B cell (primary cell): ENCODE measurements at regions of chr2 and their contacts with region 1.

Region 1: GRCh38 chr2:13006829-13007717 is 290.3 kb downstream of the TRIB2 start:
- DNase-seq: peak; percentile 77
- ATAC-seq: peak; percentile 49
- H3K4me3 ChIP-seq: no peak overlapping the region
- H3K4me3 Mint-ChIP-seq: no peak overlapping the region
- H3K27ac ChIP-seq: no peak overlapping the region
- H3K27ac Mint-ChIP-seq: no peak overlapping the region
- H3K4me1 ChIP-seq: peaks cover 0 to 3% of the 10 kb centered on the region in 2 donors
- H3K4me1 Mint-ChIP-seq: peaks cover 2% of the 10 kb centered on the region
- H3K27me3 ChIP-seq: no peaks in the 10 kb centered on the region
- H3K27me3 Mint-ChIP-seq: peaks cover 21% of the 10 kb centered on the region
- CTCF ChIP-seq: peak; percentile 96

Region 2: GRCh38 chr2:11688222-11689069 is 1318.6 kb before region 1 on chr2:
- CTCF ChIA-PET with region 1: interaction called, 11 read pairs
- POLR2A ChIA-PET with region 1: no interaction called
- intact Hi-C with region 1: loop called (anchors 10 kb)
- DNase-seq: peak; percentile 89
- ATAC-seq: peak; percentile 83
- H3K4me3 ChIP-seq: peak overlapping the region in 1 of 5 experiments; percentile 17
- H3K4me3 Mint-ChIP-seq: peak overlapping the region; percentile 67
- H3K27ac ChIP-seq: no peak overlapping the region
- H3K27ac Mint-ChIP-seq: no peak overlapping the region
- H3K4me1 ChIP-seq: peaks cover 11 to 16% of the 10 kb centered on the region in 2 donors
- H3K4me1 Mint-ChIP-seq: peaks cover 8% of the 10 kb centered on the region
- H3K27me3 ChIP-seq: peaks cover 0 to 4% (median 0%) of the 10 kb centered on the region in 4 experiments
- H3K27me3 Mint-ChIP-seq: peaks cover 25% of the 10 kb centered on the region
- CTCF ChIP-seq: peak; percentile 85

Region 3: GRCh38 chr2:11863513-11864328 is 1143.4 kb before region 1 on chr2:
- CTCF ChIA-PET with region 1: interaction called, 21 read pairs
- POLR2A ChIA-PET with region 1: no interaction called
- intact Hi-C with region 1: loop called (anchors 1 kb)
- DNase-seq: peak; percentile 80
- ATAC-seq: peak; percentile 73
- H3K4me3 ChIP-seq: peak overlapping the region in 3 of 5 experiments; percentile 5 to 29 (median 26)
- H3K4me3 Mint-ChIP-seq: peak overlapping the region; percentile 73
- H3K27ac ChIP-seq: no peak overlapping the region
- H3K27ac Mint-ChIP-seq: peak overlapping the region; percentile 59
- H3K4me1 ChIP-seq: peaks cover 70 to 81% of the 10 kb centered on the region in 2 donors
- H3K4me1 Mint-ChIP-seq: peaks cover 87% of the 10 kb centered on the region
- H3K27me3 ChIP-seq: no peaks in the 10 kb centered on the region
- H3K27me3 Mint-ChIP-seq: no peaks in the 10 kb centered on the region
- CTCF ChIP-seq: peak; percentile 96

Region 4: DNA sequence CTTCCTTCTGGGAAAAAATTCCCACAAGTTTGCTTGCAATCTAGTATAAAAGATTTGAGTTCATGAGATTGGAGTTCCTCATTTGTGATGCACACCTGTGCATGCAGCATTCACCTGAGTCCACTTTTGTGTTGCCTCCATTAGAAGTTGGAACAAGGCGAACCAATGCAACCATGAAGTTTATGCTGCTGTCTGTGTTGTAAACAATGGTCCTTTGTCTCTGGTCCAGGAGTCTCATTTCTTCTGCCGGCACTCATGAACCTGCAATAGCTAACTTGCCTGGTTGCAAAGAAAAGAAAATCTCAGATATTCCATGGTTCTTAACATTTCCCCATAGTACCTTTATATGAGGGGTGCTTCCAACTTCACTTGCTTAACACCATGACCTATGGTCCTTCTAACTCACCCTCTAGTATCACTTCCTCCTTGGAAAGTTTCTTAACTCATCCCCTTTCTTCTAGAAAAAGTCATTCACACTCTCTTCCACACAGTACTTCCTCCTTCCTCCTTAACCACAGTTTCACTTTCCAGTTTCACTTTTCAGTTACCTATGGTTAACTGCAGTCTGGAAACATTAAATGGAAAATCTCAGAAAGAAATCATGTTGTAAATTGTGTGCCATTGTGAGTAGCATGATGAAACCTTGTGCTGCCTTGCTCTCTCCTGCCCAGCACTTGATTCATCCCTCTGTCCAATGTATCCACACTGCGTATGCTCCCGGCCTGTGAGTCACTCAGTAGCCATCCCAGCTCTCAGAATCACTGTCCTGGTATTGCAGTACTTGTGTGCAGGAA is 419.1 kb before region 1 on chr2:
- CTCF ChIA-PET with region 1: no interaction called
- POLR2A ChIA-PET with region 1: no interaction called
- intact Hi-C with region 1: no loop called
- DNase-seq: peak; percentile 86
- ATAC-seq: peak; percentile 94
- H3K4me3 ChIP-seq: peak overlapping the region in 1 of 5 experiments; percentile 34
- H3K4me3 Mint-ChIP-seq: peak overlapping the region; percentile 46
- H3K27ac ChIP-seq: no peak overlapping the region
- H3K27ac Mint-ChIP-seq: peak overlapping the region; percentile 75
- H3K4me1 ChIP-seq: peaks cover 39 to 41% of the 10 kb centered on the region in 2 donors
- H3K4me1 Mint-ChIP-seq: peaks cover 46% of the 10 kb centered on the region
- H3K27me3 ChIP-seq: no peaks in the 10 kb centered on the region
- H3K27me3 Mint-ChIP-seq: no peaks in the 10 kb centered on the region
- CTCF ChIP-seq: no peak

Region 5: DNA sequence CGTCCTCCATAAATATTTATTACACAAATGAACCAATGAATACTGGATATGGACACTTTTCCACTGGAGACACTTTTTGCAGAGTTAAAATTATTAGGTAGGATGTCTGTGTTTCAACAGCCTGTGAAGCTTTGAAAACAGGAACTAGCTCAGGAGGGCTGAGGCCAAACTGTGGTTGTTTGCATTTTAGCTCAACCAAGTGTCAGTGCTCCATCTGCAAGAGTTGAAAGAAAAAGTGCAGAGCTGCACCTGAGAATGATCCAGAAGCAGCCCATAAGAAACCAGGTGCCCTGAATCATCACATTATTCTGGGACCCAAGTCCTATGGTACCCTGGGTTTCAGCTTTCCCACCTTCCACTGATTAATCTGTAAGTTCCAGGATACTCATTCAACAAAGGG is 109.9 kb before region 1 on chr2:
- CTCF ChIA-PET with region 1: no interaction called
- POLR2A ChIA-PET with region 1: no interaction called
- intact Hi-C with region 1: no loop called
- DNase-seq: peak; percentile 8
- ATAC-seq: no peak
- H3K4me3 ChIP-seq: no peak overlapping the region
- H3K4me3 Mint-ChIP-seq: no peak overlapping the region
- H3K27ac ChIP-seq: no peak overlapping the region
- H3K27ac Mint-ChIP-seq: no peak overlapping the region
- H3K4me1 ChIP-seq: peaks cover 0 to 4% of the 10 kb centered on the region in 2 donors
- H3K4me1 Mint-ChIP-seq: peaks cover 7% of the 10 kb centered on the region
- H3K27me3 ChIP-seq: peaks cover 0 to 2% (median 0%) of the 10 kb centered on the region in 4 experiments
- H3K27me3 Mint-ChIP-seq: peaks cover 9% of the 10 kb centered on the region
- CTCF ChIP-seq: no peak

Region 6: GRCh38 chr2:12931186-12931844 is 75.8 kb before region 1 on chr2:
- CTCF ChIA-PET with region 1: interaction called, 16 read pairs
- POLR2A ChIA-PET with region 1: no interaction called
- intact Hi-C with region 1: no loop called
- DNase-seq: peak; percentile 46
- ATAC-seq: no peak
- H3K4me3 ChIP-seq: no peak overlapping the region
- H3K4me3 Mint-ChIP-seq: no peak overlapping the region
- H3K27ac ChIP-seq: no peak overlapping the region
- H3K27ac Mint-ChIP-seq: no peak overlapping the region
- H3K4me1 ChIP-seq: peaks cover 0 to 9% of the 10 kb centered on the region in 2 donors
- H3K4me1 Mint-ChIP-seq: peaks cover 13% of the 10 kb centered on the region
- H3K27me3 ChIP-seq: no peaks in the 10 kb centered on the region
- H3K27me3 Mint-ChIP-seq: peaks cover 7% of the 10 kb centered on the region
- CTCF ChIP-seq: peak; percentile 87

Region 7: DNA sequence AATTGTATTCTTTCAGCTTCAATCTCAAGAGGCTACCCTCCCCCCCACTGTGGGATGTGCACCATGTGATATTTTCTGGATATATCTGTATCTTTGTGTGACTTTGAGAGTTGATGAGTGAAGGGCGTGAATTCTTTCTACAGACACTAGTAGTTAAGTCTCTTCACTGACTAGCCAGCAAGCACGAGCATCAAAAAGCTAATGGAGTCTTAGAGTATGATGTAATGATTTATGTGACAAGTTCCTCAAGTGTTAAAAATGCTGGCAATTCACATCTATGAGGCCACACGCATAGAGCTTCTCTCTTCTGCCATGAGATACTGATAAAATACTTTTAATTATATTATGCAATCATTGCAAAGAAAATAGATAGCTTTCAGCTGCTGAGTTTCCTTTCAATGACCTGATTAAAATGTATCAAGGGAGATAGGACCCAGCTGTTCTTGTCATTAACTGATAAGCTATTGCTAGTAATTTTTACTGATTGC is 14.4 kb after region 1 on chr2:
- CTCF ChIA-PET with region 1: interaction called, 21 read pairs
- POLR2A ChIA-PET with region 1: no interaction called
- intact Hi-C with region 1: no loop called
- DNase-seq: no peak
- ATAC-seq: no peak
- H3K4me3 ChIP-seq: no peak overlapping the region
- H3K4me3 Mint-ChIP-seq: no peak overlapping the region
- H3K27ac ChIP-seq: no peak overlapping the region
- H3K27ac Mint-ChIP-seq: no peak overlapping the region
- H3K4me1 ChIP-seq: no peaks in the 10 kb centered on the region
- H3K4me1 Mint-ChIP-seq: no peaks in the 10 kb centered on the region
- H3K27me3 ChIP-seq: peaks cover 0 to 10% (median 7%) of the 10 kb centered on the region in 4 experiments
- H3K27me3 Mint-ChIP-seq: peaks cover 40% of the 10 kb centered on the region
- CTCF ChIP-seq: no peak